HEK293T (cell line): ENCODE measurements at regions of chr4 and their contacts with region 1.

Region 1: DNA sequence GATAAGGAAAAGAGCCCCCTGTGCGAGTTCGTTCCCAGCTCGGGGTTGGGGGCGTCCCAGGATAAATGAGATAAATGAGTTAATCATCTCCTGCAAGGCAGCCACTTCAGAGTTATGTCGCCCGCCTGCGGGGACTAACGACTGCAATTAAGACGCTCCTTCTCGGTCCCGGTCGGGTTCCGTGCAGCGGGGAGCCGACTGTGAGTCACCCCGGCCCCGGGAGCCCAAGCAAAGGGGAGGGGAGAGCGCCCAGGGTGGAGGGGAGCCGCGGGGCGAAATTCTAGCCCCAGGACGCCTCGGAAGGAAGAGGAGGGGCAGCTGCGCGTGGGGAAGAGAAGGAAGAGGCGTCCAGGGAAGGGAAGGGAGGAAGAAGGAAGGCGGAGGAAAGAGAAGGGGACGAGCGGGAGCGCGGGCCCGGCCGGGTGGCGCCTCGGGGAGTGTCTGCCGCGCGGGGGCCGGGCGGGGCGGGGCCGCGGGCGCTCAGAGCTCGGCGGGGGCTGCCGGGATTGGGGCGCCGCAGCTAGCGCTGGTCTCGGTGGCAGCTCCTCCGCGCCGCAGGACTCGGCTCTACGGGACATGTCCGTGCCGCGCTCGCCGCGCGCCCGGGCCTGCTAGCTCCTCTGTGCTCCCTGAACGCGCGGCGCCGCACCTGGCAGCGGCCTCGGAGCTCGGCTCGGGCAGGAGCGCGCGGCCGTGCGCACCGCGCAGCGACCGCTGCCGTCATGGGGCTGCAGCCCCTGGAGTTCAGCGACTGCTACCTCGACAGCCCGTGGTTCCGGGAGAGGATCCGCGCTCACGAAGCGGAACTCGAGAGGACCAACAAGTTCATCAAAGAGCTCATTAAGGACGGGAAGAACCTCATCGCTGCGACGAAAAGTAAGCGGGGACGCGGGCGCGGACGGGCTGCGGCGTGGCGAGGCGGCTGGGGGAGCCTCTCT is at the start of gene ARHGAP10:
- DNase-seq: peak; percentile 53

Region 2: DNA sequence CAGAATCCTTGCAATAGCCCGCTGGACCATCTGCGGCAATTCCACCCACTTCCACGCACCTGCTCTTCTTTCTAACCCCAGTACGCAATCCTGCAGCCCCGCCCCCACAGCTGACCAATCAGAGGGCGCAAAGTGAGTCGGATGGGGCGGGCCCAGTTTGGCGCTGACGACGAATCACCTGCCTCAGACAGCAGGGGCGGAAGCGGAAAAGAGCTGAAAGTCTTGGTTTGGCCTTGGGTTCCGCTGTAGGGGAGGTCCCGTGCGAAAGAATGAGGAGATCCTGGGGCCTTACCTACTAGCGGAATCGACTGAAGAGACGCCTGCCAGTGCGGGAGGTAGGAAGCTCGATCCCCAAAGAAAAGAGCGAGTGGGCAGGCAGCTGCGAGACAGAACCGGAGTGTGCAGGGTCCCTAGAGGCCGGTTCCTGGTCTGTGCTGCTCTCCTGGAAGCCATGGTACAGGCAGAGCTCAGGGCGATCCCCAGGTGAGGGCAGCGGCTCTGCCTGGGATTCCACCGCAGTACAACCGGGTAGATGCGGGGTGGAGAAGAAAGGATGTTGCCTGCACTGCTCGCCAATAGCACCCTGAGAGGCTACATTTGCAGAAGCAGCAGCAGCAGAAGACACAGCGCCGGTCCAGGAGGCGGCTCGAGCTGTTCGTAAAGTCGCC is 114.5 kb before region 1 on chr4 and contains the start of gene TMEM184C:
- CTCF ChIA-PET with region 1: no interaction called
- POLR2A ChIA-PET with region 1: interaction called, 14 read pairs
- DNase-seq: peak; percentile 94

Region 3: GRCh38 chr4:147714575-147715401 is 17.1 kb before region 1 on chr4:
- CTCF ChIA-PET with region 1: interaction called, 5 read pairs
- POLR2A ChIA-PET with region 1: interaction called, 15 read pairs
- DNase-seq: no peak

Region 4: GRCh38 chr4:147768113-147768512 is 36.3 kb after region 1 on chr4:
- CTCF ChIA-PET with region 1: interaction called, 5 read pairs
- POLR2A ChIA-PET with region 1: interaction called, 25 read pairs
- DNase-seq: peak; percentile 54